Transverse colon (tissue), 4 donors: ENCODE measurements at regions of chr11 and their contacts with region 1.

Region 1: DNA sequence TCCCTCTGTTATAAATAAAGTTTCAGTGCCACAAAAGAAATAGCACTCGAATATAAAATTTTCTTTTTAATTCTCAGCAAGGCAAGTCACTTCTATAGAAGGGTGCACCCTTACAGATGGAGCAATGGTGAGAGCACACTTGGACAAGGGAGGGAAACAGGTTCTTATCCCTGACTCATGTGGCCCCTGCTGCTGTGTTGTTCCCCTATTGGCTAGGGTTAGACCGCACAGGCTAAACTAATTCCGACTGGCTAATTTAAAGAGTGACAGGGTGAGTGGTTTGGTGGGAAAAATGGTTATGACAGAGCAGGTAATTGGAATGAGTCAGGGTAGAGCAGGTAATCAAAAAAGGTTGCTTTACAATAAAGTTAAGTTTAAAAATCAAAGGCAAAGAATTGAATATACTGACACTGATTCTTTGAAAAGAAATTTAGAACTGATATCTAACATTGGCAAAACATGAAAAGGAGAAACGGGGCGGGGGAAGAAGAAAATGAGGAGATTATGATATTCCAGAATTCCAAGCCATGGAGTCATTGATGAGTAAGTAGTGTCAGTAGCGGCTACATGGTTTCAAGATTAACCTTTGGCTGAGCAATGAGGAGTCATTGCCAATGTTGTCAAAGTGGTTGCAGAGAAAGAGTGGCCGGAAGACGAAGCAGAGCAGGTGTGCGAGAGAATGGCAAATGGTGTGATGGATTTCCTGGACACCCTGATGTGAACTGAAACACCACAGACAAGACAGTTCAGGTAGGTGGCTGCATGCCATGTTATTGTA is 48.4 kb upstream of the MRGPRX1 start:
- DNase-seq: no peak
- H3K4me3 ChIP-seq: no peak overlapping the region
- H3K27ac ChIP-seq: no peak overlapping the region
- H3K4me1 ChIP-seq: no peaks in the 10 kb centered on the region
- H3K27me3 ChIP-seq: no peaks in the 10 kb centered on the region
- CTCF ChIP-seq: no peak
- EP300 ChIP-seq: no peak
- POLR2A ChIP-seq: no peak

Region 2: GRCh38 chr11:19076744-19077589 is 89.3 kb after region 1 on chr11:
- in situ Hi-C with region 1: loop called in 1 of 4 experiments (anchors 25 kb)
- intact Hi-C with region 1: no loop called
- DNase-seq: peak; percentile 68
- H3K4me3 ChIP-seq: no peak overlapping the region
- H3K27ac ChIP-seq: no peak overlapping the region
- H3K4me1 ChIP-seq: peaks cover 3 to 22% (median 20%) of the 10 kb centered on the region in 4 donors
- H3K27me3 ChIP-seq: no peaks in the 10 kb centered on the region
- CTCF ChIP-seq: peak; percentile 89 to 99 (median 98)
- EP300 ChIP-seq: no peak
- POLR2A ChIP-seq: no peak